WTC11 (cell line): ENCODE measurements at regions of chr15 and their contacts with region 1.

Region 1: DNA sequence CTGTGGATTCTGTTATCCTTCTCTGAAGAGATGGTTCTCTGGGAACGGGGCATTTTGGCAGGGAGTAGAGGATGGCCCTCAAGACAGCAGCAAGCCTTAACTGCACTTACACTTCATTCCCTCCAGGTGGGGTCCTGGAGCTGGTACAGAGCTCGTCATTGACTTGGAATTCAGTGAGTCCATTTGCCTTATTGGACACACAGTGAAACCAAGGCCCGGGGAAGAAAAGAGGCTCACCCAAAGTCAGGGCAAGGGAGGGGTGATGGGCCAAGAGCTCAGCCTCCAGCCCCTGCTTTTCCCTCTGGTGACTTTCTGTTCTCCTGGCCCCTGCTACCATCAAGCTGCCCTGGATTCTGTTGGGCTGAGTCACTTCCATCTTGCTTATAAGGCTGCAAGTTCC is 125.6 kb downstream of the ETFA start:
- DNase-seq: peak; percentile 55
- ATAC-seq: peak; percentile 90
- H3K4me3 Mint-ChIP-seq: no peak overlapping the region
- H3K27ac Mint-ChIP-seq: no peak overlapping the region
- H3K4me1 Mint-ChIP-seq: peaks cover 8% of the 10 kb centered on the region
- H3K27me3 Mint-ChIP-seq: peaks cover 11% of the 10 kb centered on the region
- CTCF ChIP-seq: peak; percentile 71

Region 2: DNA sequence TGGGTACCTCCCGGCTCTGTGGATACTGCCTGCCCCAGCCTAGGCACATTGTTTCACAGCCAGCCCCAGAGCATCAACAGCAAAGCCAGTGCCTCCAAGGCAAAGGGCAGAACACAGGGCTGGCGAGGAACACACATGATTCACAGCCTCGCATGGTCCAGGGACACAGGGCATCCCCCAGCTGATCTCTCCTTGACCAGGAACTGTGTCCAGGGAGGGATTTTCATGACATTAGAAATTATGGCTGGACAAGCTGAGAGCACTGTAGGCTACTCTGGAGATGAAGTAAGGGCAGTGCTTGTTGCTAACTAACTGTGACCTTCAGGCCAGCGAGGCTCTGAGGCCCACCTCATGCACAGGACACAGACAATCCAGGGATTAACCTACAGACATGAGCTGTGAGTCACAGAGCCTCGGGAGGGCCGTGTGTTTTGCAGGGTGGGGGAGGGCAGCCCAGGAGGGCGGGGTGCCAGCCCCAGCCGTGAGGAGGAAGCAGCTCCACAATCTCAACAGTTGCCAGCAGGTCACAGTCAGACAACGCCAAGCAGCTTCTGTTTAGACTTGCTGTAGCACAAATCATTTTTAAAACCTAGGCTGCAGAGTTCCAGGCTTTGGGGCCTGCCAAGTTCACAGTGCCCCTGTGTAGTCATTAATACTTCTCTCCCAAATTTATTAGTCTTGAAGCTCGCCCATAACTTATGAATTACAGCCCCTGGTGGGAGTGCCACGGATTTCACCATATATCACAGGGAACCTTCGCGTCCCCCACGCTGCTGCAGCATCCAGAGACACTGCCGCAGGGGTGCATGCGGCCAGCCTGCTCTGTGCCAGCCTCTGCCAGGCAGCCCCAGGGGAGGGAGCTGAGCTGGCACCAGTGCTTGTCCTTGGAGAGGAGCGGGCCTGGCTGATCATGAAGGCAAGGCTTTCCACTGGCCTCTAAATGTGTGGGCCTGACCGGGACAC is 10.8 kb after region 1 on chr15:
- CTCF ChIA-PET with region 1: interaction called, 15 read pairs
- POLR2A ChIA-PET with region 1: no interaction called
- DNase-seq: no peak
- ATAC-seq: peak; percentile 14
- H3K4me3 Mint-ChIP-seq: no peak overlapping the region
- H3K27ac Mint-ChIP-seq: no peak overlapping the region
- H3K4me1 Mint-ChIP-seq: peaks cover 22% of the 10 kb centered on the region
- H3K27me3 Mint-ChIP-seq: no peaks in the 10 kb centered on the region
- CTCF ChIP-seq: no peak

Region 3: DNA sequence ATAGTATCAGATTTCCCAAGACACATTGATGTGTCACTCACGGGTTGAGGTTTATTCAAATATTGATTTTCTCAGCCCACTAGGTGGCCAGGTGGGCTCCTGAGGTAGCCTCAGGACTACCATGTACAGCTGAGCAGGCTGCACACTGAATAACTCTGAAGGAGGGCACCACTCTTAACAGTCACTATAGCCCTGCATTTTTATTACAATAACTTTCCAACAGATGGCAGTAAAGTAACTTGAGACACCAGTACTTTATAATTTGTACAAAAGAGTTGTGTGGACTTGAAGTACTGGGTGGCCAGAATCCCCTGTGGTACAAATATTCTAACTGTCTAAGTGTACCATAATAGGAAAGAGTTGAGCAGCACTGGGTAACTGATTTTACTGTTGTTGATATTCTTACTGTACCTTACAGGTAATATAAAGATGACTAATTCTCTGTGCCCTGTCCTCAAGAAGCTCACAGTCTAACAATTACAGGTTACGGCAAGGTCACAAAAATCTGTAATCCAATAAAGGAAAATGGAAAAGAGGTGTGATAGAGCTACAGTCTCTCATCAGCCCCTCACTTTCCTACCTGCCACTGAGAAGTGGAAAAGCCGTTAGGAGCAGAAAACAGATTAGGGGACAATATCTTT is 49.6 kb after region 1 on chr15:
- CTCF ChIA-PET with region 1: no interaction called
- POLR2A ChIA-PET with region 1: no interaction called
- DNase-seq: no peak
- ATAC-seq: peak; percentile 68
- H3K4me3 Mint-ChIP-seq: no peak overlapping the region
- H3K27ac Mint-ChIP-seq: no peak overlapping the region
- H3K4me1 Mint-ChIP-seq: peaks cover 17% of the 10 kb centered on the region
- H3K27me3 Mint-ChIP-seq: no peaks in the 10 kb centered on the region
- CTCF ChIP-seq: no peak